ENCODE measurements at regions of chr7 and their contacts with region 1.

Region 1: GRCh38 chr7:88243345-88243909 is 23.6 kb upstream of the SRI start:
- DNase-seq: peak; percentile 52
- H3K4me3 ChIP-seq: no peak overlapping the region
- H3K27ac ChIP-seq: no peak overlapping the region
- H3K4me1 ChIP-seq: no peaks in the 10 kb centered on the region
- H3K27me3 ChIP-seq: peaks cover 11% of the 10 kb centered on the region
- CTCF ChIP-seq: peak; percentile 70

Region 2: GRCh38 chr7:88132725-88133124 is 110.7 kb before region 1 on chr7:
- CTCF ChIA-PET with region 1: no interaction called
- POLR2A ChIA-PET with region 1: no interaction called
- intact Hi-C with region 1: no loop called
- DNase-seq: no peak
- H3K4me3 ChIP-seq: no peak overlapping the region
- H3K27ac ChIP-seq: no peak overlapping the region
- H3K4me1 ChIP-seq: no peaks in the 10 kb centered on the region
- H3K27me3 ChIP-seq: no peaks in the 10 kb centered on the region
- CTCF ChIP-seq: no peak

Region 3: DNA sequence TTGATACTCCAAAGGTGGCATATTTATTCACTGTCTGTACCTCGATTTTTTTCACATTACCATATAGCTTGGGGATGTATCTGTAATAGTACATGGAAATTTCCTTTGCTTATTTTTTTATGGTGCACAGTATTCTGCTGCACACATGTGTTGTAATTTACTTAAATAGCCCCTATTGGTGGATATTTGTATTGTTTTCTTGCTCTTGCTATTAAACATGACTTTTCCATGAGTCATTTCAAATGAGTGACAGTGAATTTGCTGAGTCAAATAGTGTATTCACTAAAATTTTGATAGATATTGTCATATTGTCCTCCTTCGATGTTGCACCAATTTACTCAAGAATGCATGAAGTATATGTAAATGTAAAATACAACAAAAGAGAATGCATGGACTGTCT is 186.0 kb after region 1 on chr7:
- CTCF ChIA-PET with region 1: no interaction called
- POLR2A ChIA-PET with region 1: no interaction called
- intact Hi-C with region 1: no loop called
- DNase-seq: no peak
- H3K4me3 ChIP-seq: no peak overlapping the region
- H3K27ac ChIP-seq: no peak overlapping the region
- H3K4me1 ChIP-seq: no peaks in the 10 kb centered on the region
- H3K27me3 ChIP-seq: no peaks in the 10 kb centered on the region
- CTCF ChIP-seq: no peak

Region 4: DNA sequence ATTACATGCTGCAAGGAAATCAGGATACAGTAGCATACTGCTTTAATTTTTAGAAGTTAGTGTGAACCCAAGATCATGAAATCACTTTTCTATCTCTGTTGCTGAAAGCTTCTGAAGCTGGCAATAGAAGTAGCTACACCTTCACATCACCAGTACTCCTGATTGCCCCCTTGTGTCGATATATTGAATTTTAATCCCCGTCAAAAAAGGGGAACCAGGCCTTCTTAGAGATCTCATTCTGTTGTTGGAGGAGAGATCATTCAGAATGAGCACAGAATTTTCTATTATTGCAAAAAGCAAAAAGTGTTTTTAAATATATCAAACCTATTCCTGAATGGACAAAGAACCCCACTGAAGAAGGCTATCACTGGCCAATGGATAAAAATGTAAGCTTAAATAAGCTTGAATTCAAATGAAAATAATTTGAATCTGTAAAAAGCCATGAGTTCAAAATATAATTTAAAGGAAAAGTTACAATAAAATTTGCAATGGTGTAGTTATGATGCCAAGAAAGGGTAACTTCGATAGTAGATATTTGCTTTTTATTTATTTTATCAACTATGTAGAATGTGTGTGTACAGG is 591.8 kb after region 1 on chr7:
- CTCF ChIA-PET with region 1: interaction called, 7 read pairs
- POLR2A ChIA-PET with region 1: no interaction called
- intact Hi-C with region 1: loop called (anchors 2 kb)
- DNase-seq: peak; percentile 55
- H3K4me3 ChIP-seq: no peak overlapping the region
- H3K27ac ChIP-seq: no peak overlapping the region
- H3K4me1 ChIP-seq: no peaks in the 10 kb centered on the region
- H3K27me3 ChIP-seq: no peaks in the 10 kb centered on the region
- CTCF ChIP-seq: peak; percentile 61

Region 5: GRCh38 chr7:89622838-89623672 is 1379.6 kb after region 1 on chr7:
- CTCF ChIA-PET with region 1: interaction called, 8 read pairs
- POLR2A ChIA-PET with region 1: no interaction called
- intact Hi-C with region 1: loop called (anchors 5 kb)
- DNase-seq: peak; percentile 58
- H3K4me3 ChIP-seq: no peak overlapping the region
- H3K27ac ChIP-seq: no peak overlapping the region
- H3K4me1 ChIP-seq: no peaks in the 10 kb centered on the region
- H3K27me3 ChIP-seq: peaks cover 10% of the 10 kb centered on the region
- CTCF ChIP-seq: peak; percentile 81

Region 6: GRCh38 chr7:90119178-90119971 is 1875.9 kb after region 1 on chr7:
- CTCF ChIA-PET with region 1: no interaction called
- POLR2A ChIA-PET with region 1: no interaction called
- intact Hi-C with region 1: loop called (anchors 10 kb)
- DNase-seq: peak; percentile 63
- H3K4me3 ChIP-seq: peak overlapping the region; percentile 51
- H3K27ac ChIP-seq: no peak overlapping the region
- H3K4me1 ChIP-seq: no peaks in the 10 kb centered on the region
- H3K27me3 ChIP-seq: peaks cover 17% of the 10 kb centered on the region
- CTCF ChIP-seq: no peak